Heart left ventricle (tissue), 16 donors: ENCODE measurements at regions of chr17 and their contacts with region 1.

Region 1: GRCh38 chr17:1628856-1629646 is 417 bp upstream of the SLC43A2 start:
- DNase-seq: peak; percentile 94 to 97 (median 96)
- ATAC-seq: peak; percentile 83 to 90 (median 88)
- H3K4me3 ChIP-seq: peak overlapping the region; percentile 32 to 96 (median 80)
- H3K27ac ChIP-seq: peak overlapping the region; percentile 80 to 97 (median 92)
- H3K4me1 ChIP-seq: peaks cover 0 to 56% (median 14%) of the 10 kb centered on the region in 12 donors
- H3K27me3 ChIP-seq: no peaks in the 10 kb centered on the region
- CTCF ChIP-seq: peak in 11 of 12 donors; percentile 31 to 66 (median 56)
- POLR2A ChIP-seq: peak in 1 of 2 donors; percentile 79

Region 2: DNA sequence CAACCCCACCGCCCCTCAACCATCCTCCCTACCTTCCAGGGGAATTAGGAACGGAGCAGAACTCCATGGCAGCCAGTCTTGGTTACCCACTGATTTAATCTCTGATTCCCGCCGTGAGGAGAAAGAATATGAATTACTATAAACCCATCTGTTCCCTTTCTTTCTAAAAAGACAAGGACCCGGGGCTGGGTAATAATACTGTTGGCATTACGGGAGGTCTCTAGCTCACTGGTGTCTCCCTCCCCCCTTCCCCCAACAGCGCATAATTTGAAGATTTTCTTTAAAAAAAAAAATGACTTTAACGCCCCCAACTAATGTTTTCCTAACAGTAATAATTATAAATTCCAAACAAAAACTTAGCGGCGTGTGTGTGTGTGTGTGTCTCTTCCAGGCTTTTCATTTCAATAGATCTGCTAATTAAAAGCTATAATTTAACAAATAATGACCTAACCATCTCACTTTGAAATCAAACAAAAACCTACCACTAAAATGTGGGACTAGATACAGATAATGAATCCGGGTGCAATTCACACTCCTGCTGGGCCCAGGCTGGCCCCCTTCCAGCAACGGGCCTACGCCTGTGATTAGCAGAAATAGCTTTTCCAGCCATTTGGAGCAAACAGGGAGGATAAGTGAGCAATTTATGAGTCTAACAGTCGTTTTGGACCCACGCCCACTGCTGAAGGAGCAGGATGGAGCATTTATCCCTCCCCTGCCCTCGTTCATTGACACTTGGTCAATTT is 377.0 kb before region 1 on chr17:
- intact Hi-C with region 1: no loop called
- DNase-seq: peak; percentile 57 to 69 (median 64)
- ATAC-seq: peak in 2 of 4 donors; percentile 33 to 57
- H3K4me3 ChIP-seq: no peak overlapping the region
- H3K27ac ChIP-seq: peak overlapping the region in 6 of 12 donors; percentile 11 to 43 (median 28)
- H3K4me1 ChIP-seq: peaks cover 0 to 25% (median 9%) of the 10 kb centered on the region in 12 donors
- H3K27me3 ChIP-seq: no peaks in the 10 kb centered on the region
- CTCF ChIP-seq: no peak
- POLR2A ChIP-seq: no peak

Region 3: GRCh38 chr17:1267471-1267947 is 361.5 kb before region 1 on chr17:
- intact Hi-C with region 1: loop called in 2 of 10 experiments (anchors 5 to 10 kb)
- DNase-seq: no peak
- ATAC-seq: peak; percentile 13 to 48 (median 20)
- H3K4me3 ChIP-seq: peak overlapping the region; percentile 56 to 87 (median 70)
- H3K27ac ChIP-seq: peak overlapping the region; percentile 84 to 93 (median 90)
- H3K4me1 ChIP-seq: peaks cover 0 to 27% (median 11%) of the 10 kb centered on the region in 12 donors
- H3K27me3 ChIP-seq: peaks cover 2 to 30% (median 23%) of the 10 kb centered on the region in 9 donors
- CTCF ChIP-seq: no peak
- POLR2A ChIP-seq: no peak

Region 4: GRCh38 chr17:1275962-1276736 is 352.9 kb before region 1 on chr17:
- intact Hi-C with region 1: loop called in 1 of 10 experiments (anchors 10 kb)
- DNase-seq: peak; percentile 48 to 85 (median 62)
- ATAC-seq: peak; percentile 72 to 83 (median 77)
- H3K4me3 ChIP-seq: no peak overlapping the region
- H3K27ac ChIP-seq: no peak overlapping the region
- H3K4me1 ChIP-seq: peaks cover 0 to 8% (median 0%) of the 10 kb centered on the region in 12 donors
- H3K27me3 ChIP-seq: peaks cover 0 to 24% (median 9%) of the 10 kb centered on the region in 9 donors
- CTCF ChIP-seq: peak; percentile 72 to 88 (median 80)
- POLR2A ChIP-seq: no peak

Region 5: GRCh38 chr17:1365445-1366039 is 263.5 kb before region 1 on chr17:
- intact Hi-C with region 1: loop called in 2 of 10 experiments (anchors 10 kb)
- DNase-seq: peak in 4 of 5 donors; percentile 47 to 65 (median 58)
- ATAC-seq: peak; percentile 40 to 75 (median 64)
- H3K4me3 ChIP-seq: peak overlapping the region in 4 of 12 donors; percentile 7 to 24 (median 12)
- H3K27ac ChIP-seq: peak overlapping the region in 5 of 12 donors; percentile 2 to 30 (median 21)
- H3K4me1 ChIP-seq: peaks cover 20 to 92% (median 78%) of the 10 kb centered on the region in 12 donors
- H3K27me3 ChIP-seq: no peaks in the 10 kb centered on the region
- CTCF ChIP-seq: peak; percentile 79 to 93 (median 89)
- POLR2A ChIP-seq: no peak

Region 6: GRCh38 chr17:1561400-1562175 is 67.5 kb before region 1 on chr17:
- intact Hi-C with region 1: no loop called
- DNase-seq: peak in 2 of 5 donors; percentile 33 to 66
- ATAC-seq: peak in 3 of 4 donors; percentile 23 to 41 (median 28)
- H3K4me3 ChIP-seq: peak overlapping the region; percentile 70 to 95 (median 84)
- H3K27ac ChIP-seq: peak overlapping the region; percentile 28 to 95 (median 82)
- H3K4me1 ChIP-seq: peaks cover 3 to 51% (median 24%) of the 10 kb centered on the region in 12 donors
- H3K27me3 ChIP-seq: no peaks in the 10 kb centered on the region
- CTCF ChIP-seq: peak in 7 of 12 donors; percentile 14 to 51 (median 32)
- POLR2A ChIP-seq: no peak

Region 7: GRCh38 chr17:1573916-1574696 is 54.9 kb before region 1 on chr17:
- intact Hi-C with region 1: loop called (anchors 1 to 5 kb)
- DNase-seq: peak; percentile 85 to 95 (median 86)
- ATAC-seq: peak; percentile 42 to 73 (median 64)
- H3K4me3 ChIP-seq: peak overlapping the region in 1 of 12 donors; percentile 7
- H3K27ac ChIP-seq: peak overlapping the region in 11 of 12 donors; percentile 15 to 96 (median 59)
- H3K4me1 ChIP-seq: peaks cover 0 to 53% (median 35%) of the 10 kb centered on the region in 12 donors
- H3K27me3 ChIP-seq: no peaks in the 10 kb centered on the region
- CTCF ChIP-seq: peak; percentile 93 to 98 (median 97)
- POLR2A ChIP-seq: peak in 1 of 2 donors; percentile 27

Region 8: DNA sequence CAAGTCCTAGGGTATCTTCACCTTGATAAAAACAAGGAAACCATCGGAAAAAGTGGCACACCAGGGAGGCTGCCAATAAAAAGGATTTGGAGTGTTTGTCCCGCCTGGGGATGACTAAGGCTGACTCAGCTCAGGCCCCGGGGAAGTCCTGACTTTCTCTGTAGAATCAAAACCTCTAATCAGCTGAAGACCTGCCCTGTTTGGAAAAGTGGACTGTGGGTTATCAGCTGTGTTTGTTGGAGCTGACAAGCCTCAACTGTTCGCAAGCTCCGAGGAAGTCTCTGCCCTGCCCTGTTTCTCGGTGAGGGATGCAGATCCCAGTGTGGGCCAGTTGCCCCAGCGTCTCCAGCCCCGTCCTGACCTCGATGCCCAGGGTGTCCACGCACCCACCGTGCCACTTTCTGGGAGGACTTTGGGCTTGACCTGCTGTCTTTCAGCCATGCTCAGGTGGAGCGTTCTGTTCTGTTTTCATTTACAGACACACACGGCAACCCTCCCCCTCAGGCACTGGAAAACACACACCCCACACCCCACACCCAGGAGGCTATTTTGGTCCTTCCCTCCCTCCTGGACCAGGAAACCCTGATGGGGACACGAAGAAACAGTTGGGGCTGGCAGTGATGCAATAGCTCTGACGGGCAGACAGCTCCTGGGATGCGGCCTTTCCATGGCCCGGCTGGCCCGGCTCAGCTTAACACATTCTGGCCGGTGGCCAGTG is 38.9 kb before region 1 on chr17:
- intact Hi-C with region 1: loop called in 1 of 10 experiments (anchors 5 kb)
- DNase-seq: peak; percentile 64 to 92 (median 82)
- ATAC-seq: peak; percentile 91 to 95 (median 94)
- H3K4me3 ChIP-seq: no peak overlapping the region
- H3K27ac ChIP-seq: peak overlapping the region; percentile 58 to 91 (median 79)
- H3K4me1 ChIP-seq: peaks cover 0 to 68% (median 15%) of the 10 kb centered on the region in 12 donors
- H3K27me3 ChIP-seq: no peaks in the 10 kb centered on the region
- CTCF ChIP-seq: no peak
- POLR2A ChIP-seq: peak in 1 of 2 donors; percentile 12

Region 9: DNA sequence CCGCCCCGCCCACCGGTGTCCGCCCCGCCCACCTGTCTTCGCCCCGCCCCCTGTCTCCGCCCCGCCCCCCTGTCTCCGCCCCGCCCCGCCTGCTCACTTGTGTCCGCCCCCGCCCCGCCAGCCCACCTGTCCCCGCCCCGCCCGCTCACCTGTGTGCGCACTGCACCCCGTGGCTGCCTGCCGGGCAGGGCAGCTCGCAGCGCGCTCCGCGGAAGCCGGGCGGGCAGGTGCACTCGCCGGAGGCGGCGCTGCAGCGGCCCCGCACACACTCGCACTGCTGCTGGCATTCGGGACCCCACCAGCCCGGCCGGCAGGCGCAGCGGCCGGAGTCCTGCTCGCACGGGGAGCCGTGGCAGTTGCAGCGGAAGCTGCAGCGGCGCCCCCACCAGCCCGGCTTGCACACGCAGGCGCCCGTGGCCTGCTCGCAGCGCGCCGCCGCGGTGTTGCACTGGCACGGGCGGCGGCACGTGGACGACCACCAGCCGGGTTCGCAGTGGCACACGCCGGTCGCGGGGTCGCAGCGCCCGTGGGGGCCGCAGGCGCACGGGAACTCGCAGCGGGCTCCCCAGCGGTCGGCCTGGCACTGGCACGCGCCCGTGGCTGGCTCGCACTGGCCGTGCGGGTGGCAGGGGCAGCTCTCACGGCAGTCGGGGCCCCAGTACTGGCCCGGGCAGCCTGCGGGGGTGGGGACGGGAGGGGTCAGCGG is 14.4 kb after region 1 on chr17:
- intact Hi-C with region 1: loop called in 2 of 10 experiments (anchors 2 kb)
- DNase-seq: peak in 2 of 5 donors; percentile 59 to 75
- ATAC-seq: peak in 2 of 4 donors; percentile 4 to 7
- H3K4me3 ChIP-seq: peak overlapping the region; percentile 15 to 73 (median 57)
- H3K27ac ChIP-seq: peak overlapping the region; percentile 41 to 96 (median 85)
- H3K4me1 ChIP-seq: peaks cover 0 to 68% (median 45%) of the 10 kb centered on the region in 12 donors
- H3K27me3 ChIP-seq: no peaks in the 10 kb centered on the region
- CTCF ChIP-seq: peak in 4 of 12 donors; percentile 11 to 29 (median 20)
- POLR2A ChIP-seq: no peak